ENCODE measurements at regions of chr12 and their contacts with region 1.

Region 1: DNA sequence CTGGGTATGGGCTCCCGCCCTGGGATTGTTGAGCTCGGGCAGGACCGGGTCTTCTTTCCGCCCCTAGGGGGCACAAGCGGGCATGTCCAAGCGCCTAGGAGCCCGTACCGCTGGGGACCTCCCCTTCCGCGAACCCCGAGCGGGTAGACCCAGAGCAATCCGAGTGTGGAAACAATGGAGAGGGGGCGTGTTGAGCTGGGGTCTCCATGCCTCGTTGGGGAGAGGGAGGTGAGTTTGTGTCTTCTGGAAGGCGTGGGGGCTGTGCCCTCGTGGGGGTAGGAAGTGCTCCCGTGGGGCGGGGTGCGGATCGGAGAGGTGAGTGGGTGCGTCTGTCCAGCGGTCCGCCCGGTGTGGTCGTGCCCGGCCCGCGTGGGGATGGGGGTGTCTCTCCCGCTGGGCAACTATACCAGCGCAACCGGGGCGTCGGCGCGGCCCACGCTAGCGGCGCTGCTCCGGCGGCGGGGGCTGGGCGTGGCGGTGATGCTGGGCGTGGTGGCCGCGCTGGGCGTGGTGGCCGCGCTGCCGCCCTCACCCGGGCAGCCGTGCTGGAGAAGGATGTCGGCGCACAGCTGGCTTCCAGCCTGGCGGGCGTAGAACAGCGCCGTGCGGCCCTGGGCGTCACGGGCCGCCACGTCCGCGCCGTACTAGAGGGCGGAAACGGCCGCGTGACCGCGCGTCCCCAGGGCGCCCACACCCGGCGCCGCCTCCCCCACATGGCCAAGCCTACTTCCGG is 12.2 kb downstream of the AGAP2 start:
- DNase-seq: peak; percentile 16
- CTCF ChIP-seq: peak; percentile 39

Region 2: GRCh38 chr12:57693659-57694458 is 32.5 kb before region 1 on chr12 and contains the start of gene OS9:
- CTCF ChIA-PET with region 1: interaction called, 13 read pairs
- POLR2A ChIA-PET with region 1: no interaction called
- DNase-seq: peak; percentile 95
- CTCF ChIP-seq: peak; percentile 75